ENCODE measurements at regions of chr10 and their contacts with region 1.

Region 1: DNA sequence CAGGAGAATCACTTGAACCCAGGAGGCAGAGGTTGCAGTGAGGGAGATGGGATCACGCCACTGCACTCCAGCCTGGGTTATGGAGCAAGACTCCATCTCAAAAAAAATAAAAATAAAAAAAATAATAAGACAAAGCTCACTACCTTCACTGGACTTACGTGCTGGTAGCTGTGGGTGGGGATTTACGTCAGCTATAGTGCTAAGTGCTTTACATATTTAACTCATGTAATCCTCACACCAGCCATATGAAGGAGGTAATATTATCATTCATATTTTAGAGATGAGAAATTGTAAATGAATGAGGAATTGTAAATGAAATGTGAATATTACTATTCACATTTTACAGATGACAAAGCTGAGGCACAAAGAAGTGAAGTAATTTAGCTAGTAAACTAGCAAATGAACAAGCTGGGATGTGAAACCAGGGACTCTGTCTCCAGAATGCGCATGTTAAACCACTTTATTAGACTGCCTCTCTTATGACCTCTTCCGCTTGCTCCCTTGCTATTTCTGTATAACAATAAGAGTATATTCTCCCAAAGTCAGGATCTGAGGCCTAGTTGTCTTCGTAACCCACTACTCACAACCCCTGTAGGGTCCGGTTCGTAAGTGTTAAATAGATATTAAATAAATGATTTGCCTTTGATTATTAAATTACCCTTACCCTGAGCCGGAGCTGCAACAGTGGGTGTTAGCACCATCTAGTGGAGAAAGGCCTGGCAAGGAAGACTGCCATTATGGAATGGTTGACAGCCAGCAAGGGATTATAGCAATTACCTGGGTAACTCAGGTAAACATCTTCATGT is 70.2 kb downstream of the HTR7 start:
- DNase-seq: peak; percentile 47
- H3K4me3 ChIP-seq: no peak overlapping the region
- H3K27ac ChIP-seq: no peak overlapping the region
- H3K4me1 ChIP-seq: no peaks in the 10 kb centered on the region
- H3K27me3 ChIP-seq: peaks cover 9 to 25% of the 10 kb centered on the region in 2 experiments
- CTCF ChIP-seq: peak; percentile 72 to 78
- POLR2A ChIP-seq: no peak

Region 2: DNA sequence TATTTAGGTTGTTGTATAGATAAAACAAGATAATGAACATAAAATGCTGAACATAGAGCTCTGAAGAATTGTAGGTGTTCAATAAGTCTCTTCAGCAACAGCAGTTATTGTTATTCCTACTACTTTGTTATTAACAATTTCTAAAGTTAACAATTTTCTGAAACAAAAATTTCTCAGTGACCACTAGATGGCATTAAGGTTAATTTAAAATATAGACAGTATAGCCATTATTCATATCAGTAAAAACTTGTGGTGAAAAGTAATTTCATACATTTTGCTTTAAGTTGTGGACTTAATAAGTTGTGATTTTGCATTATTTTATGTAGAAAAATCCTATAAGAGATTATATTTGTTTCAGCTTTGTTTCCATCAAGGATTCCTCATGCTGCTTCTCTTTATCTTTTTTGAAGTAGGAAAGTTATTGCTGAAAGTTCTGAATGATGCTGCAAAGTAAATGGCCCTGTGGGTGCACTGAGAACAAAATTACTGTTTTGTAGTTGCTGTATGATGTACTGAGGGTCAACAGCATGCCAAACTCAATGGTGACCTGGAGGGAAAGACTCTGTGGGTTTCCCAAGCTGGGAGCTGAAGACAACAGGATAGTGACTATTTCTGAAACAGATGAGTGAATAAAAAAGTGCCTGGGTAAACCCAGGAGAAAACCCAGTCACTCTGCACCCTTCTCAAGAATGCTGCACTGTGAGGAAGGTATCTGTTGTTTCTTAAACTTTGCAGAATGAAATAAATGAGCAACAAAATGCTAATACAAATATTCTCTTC is 832.6 kb before region 1 on chr10:
- CTCF ChIA-PET with region 1: interaction called, 10 read pairs
- POLR2A ChIA-PET with region 1: no interaction called
- dilution Hi-C with region 1: no loop called
- intact Hi-C with region 1: loop called (anchors 1 kb)
- DNase-seq: peak; percentile 4
- H3K4me3 ChIP-seq: no peak overlapping the region
- H3K27ac ChIP-seq: no peak overlapping the region
- H3K4me1 ChIP-seq: no peaks in the 10 kb centered on the region
- H3K27me3 ChIP-seq: peaks cover 0 to 12% of the 10 kb centered on the region in 2 experiments
- CTCF ChIP-seq: no peak
- POLR2A ChIP-seq: no peak

Region 3: DNA sequence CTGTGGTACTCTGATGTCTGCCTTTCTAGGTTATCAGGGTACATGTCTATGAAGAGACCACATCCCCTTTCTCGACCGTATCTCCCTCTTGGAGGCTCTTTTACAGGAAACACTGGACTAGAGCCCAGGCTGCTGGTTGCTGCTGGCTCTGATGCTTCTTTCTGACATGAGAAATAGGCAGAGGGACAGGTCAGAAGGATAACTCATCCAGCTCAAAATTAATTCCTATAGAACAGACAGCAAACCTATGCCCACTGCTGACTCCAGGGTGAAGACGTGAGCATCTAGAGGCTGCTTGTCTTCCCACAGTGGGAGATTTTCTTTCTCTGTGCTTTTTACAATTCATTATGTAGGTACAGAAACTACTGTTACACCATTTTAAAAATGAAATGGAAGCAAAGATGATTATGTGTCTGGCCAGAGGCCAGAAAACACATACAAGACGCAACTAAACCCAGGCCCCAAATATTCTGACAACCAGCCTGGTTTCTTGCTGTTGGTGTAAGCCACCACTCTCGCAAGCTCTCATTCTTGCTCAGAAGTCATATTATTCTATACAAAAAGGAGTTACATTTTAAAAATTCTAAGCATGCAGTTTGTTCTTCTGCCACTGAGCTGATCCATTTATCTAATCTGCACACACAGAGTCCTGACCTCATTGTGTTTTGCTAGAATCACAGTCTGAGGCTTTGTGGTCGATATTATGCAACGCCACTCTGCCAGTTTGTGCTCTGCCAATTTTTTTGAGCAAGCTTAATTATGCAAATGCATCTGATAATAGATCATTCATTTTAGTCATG is 661.9 kb before region 1 on chr10:
- CTCF ChIA-PET with region 1: no interaction called
- POLR2A ChIA-PET with region 1: no interaction called
- dilution Hi-C with region 1: no loop called
- intact Hi-C with region 1: no loop called
- DNase-seq: no peak
- H3K4me3 ChIP-seq: no peak overlapping the region
- H3K27ac ChIP-seq: no peak overlapping the region
- H3K4me1 ChIP-seq: no peaks in the 10 kb centered on the region
- H3K27me3 ChIP-seq: no peaks in the 10 kb centered on the region
- CTCF ChIP-seq: no peak
- POLR2A ChIP-seq: no peak

Region 4: GRCh38 chr10:90751107-90751997 is 36.2 kb before region 1 on chr10:
- CTCF ChIA-PET with region 1: interaction called, 22 read pairs
- POLR2A ChIA-PET with region 1: no interaction called
- dilution Hi-C with region 1: no loop called
- intact Hi-C with region 1: loop called (anchors 2 kb)
- DNase-seq: peak; percentile 58
- H3K4me3 ChIP-seq: no peak overlapping the region
- H3K27ac ChIP-seq: no peak overlapping the region
- H3K4me1 ChIP-seq: no peaks in the 10 kb centered on the region
- H3K27me3 ChIP-seq: peaks cover 4 to 11% of the 10 kb centered on the region in 2 experiments
- CTCF ChIP-seq: peak; percentile 63 to 66
- POLR2A ChIP-seq: no peak

Region 5: GRCh38 chr10:90798482-90798881 is 10.9 kb after region 1 on chr10:
- CTCF ChIA-PET with region 1: interaction called, 18 read pairs
- POLR2A ChIA-PET with region 1: no interaction called
- dilution Hi-C with region 1: no loop called
- intact Hi-C with region 1: no loop called
- DNase-seq: no peak
- H3K4me3 ChIP-seq: no peak overlapping the region
- H3K27ac ChIP-seq: no peak overlapping the region
- H3K4me1 ChIP-seq: no peaks in the 10 kb centered on the region
- H3K27me3 ChIP-seq: no peaks in the 10 kb centered on the region
- CTCF ChIP-seq: no peak
- POLR2A ChIP-seq: no peak

Region 6: GRCh38 chr10:90862908-90863514 is 75.4 kb after region 1 on chr10:
- CTCF ChIA-PET with region 1: interaction called, 30 read pairs
- POLR2A ChIA-PET with region 1: no interaction called
- dilution Hi-C with region 1: no loop called
- intact Hi-C with region 1: no loop called
- DNase-seq: peak; percentile 49
- H3K4me3 ChIP-seq: no peak overlapping the region
- H3K27ac ChIP-seq: no peak overlapping the region
- H3K4me1 ChIP-seq: peaks cover 19% of the 10 kb centered on the region
- H3K27me3 ChIP-seq: peaks cover 24 to 43% of the 10 kb centered on the region in 2 experiments
- CTCF ChIP-seq: peak; percentile 57 to 62
- POLR2A ChIP-seq: no peak

Region 7: DNA sequence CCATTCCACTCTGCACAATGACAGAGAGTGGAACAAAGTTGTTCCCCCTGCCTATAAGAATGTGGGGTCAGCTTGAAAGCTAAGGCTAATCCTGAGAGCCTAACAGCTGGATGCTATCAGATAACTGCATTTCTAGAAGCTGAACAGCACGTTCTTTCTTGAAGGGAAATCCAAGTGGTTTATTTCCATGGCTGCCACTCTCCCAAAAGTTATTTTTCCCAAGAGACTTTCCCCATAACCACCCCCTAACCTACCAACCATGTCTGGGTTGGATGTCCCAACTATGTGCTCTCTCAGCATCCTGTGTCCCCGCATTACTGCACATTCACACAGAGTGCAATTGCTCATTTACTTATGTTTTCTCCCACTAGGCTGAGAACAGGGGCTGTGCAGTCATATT is 274.0 kb after region 1 on chr10:
- CTCF ChIA-PET with region 1: no interaction called
- POLR2A ChIA-PET with region 1: no interaction called
- dilution Hi-C with region 1: no loop called
- intact Hi-C with region 1: no loop called
- DNase-seq: no peak
- H3K4me3 ChIP-seq: no peak overlapping the region
- H3K27ac ChIP-seq: no peak overlapping the region
- H3K4me1 ChIP-seq: no peaks in the 10 kb centered on the region
- H3K27me3 ChIP-seq: no peaks in the 10 kb centered on the region
- CTCF ChIP-seq: no peak
- POLR2A ChIP-seq: no peak